Activated CD8-positive, alpha-beta T cell treated with anti-CD3 and anti-CD28 coated beads, Interleukin-2, amount 10 ng/mL, durations not matched to agents 7 days and 5 days (primary cell): ENCODE measurements at regions of chr13 and their contacts with region 1.

Region 1: DNA sequence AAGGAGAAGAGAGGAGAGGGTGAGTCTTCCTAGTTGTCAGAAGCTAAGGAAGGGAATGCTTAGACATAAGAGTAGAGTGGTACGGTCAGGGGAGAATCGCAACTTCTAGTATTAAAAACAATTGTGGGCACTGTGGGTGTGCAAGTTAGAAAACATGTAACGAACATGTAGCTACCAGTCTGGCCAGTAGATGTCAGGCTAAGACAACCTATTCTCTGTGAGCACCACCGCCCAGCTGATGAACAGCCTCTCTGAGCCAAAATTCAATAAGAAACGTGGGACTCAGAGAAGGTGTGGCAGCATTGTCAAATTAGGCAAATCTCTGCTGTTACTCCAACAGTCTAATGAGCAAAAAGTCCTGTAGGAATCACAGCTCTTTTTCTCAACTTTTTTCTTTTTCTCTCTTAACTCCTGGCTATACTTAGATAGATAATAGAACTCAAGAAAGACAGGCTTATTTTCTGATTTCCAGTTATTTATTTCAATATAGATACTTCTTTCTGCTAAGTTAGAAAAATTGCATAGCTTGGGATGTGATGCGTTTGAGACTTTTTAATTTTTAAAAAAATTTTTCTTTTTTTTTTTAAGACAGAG is 186.2 kb downstream of the USP12 start:
- DNase-seq: peak; percentile 85
- ATAC-seq: peak; percentile 87
- H3K4me3 Mint-ChIP-seq: no peak overlapping the region
- H3K27ac Mint-ChIP-seq: no peak overlapping the region
- H3K4me1 Mint-ChIP-seq: peaks cover 9% of the 10 kb centered on the region
- H3K27me3 Mint-ChIP-seq: peaks cover 9% of the 10 kb centered on the region

Region 2: GRCh38 chr13:26965952-26966700 is 19.3 kb before region 1 on chr13:
- CTCF ChIA-PET with region 1: no interaction called
- POLR2A ChIA-PET with region 1: no interaction called
- DNase-seq: no peak
- ATAC-seq: no peak
- H3K4me3 Mint-ChIP-seq: no peak overlapping the region
- H3K27ac Mint-ChIP-seq: no peak overlapping the region
- H3K4me1 Mint-ChIP-seq: no peaks in the 10 kb centered on the region
- H3K27me3 Mint-ChIP-seq: no peaks in the 10 kb centered on the region

Region 3: GRCh38 chr13:27022571-27023311 is 37.4 kb after region 1 on chr13:
- CTCF ChIA-PET with region 1: interaction called, 13 read pairs
- POLR2A ChIA-PET with region 1: no interaction called
- DNase-seq: no peak
- ATAC-seq: no peak
- H3K4me3 Mint-ChIP-seq: no peak overlapping the region
- H3K27ac Mint-ChIP-seq: no peak overlapping the region
- H3K4me1 Mint-ChIP-seq: peaks cover 17% of the 10 kb centered on the region
- H3K27me3 Mint-ChIP-seq: peaks cover 8% of the 10 kb centered on the region

Region 4: DNA sequence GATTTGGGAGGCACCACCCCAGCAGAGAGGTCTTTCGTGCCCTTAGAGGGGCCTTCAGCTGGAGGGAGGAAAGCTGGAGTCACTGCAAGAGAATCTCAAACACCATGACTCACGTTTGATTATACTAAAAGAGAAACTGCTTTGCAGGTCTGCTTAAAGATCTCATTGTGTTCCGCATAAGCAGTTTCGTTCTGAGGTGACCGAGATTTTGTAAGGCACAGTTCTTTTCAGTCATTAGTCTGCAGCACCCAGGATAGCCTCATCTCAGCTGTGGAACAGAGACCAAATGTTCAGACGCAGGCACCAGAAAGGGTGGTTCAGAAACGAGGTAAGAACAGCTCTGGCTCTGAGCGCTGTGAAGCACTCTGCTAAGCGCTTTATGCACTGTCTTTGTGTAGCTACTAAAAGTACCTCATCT is 367.8 kb after region 1 on chr13:
- CTCF ChIA-PET with region 1: interaction called, 164 read pairs
- POLR2A ChIA-PET with region 1: interaction called, 4 read pairs
- DNase-seq: peak; percentile 25
- ATAC-seq: peak; percentile 55
- H3K4me3 Mint-ChIP-seq: no peak overlapping the region
- H3K27ac Mint-ChIP-seq: no peak overlapping the region
- H3K4me1 Mint-ChIP-seq: no peaks in the 10 kb centered on the region
- H3K27me3 Mint-ChIP-seq: peaks cover 9% of the 10 kb centered on the region